T-cell (primary cell): ENCODE measurements at regions of chr1 and their contacts with region 1.

Region 1: GRCh38 chr1:180881806-180882509 is 30.7 kb upstream of the KIAA1614 start:
- DNase-seq: peak in 1 of 35 experiments; percentile 19
- ATAC-seq: no peak
- H3K4me3 ChIP-seq: no peak overlapping the region
- H3K4me3 Mint-ChIP-seq: no peak overlapping the region
- H3K27ac ChIP-seq: no peak overlapping the region
- H3K27ac Mint-ChIP-seq: no peak overlapping the region
- H3K4me1 ChIP-seq: no peaks in the 10 kb centered on the region
- H3K4me1 Mint-ChIP-seq: no peaks in the 10 kb centered on the region
- H3K27me3 ChIP-seq: no peaks in the 10 kb centered on the region
- H3K27me3 Mint-ChIP-seq: no peaks in the 10 kb centered on the region

Region 2: GRCh38 chr1:180680558-180681144 is 201.3 kb before region 1 on chr1:
- CTCF ChIA-PET with region 1: no interaction called
- POLR2A ChIA-PET with region 1: no interaction called
- DNase-seq: no peak
- ATAC-seq: no peak
- H3K4me3 ChIP-seq: no peak overlapping the region
- H3K4me3 Mint-ChIP-seq: no peak overlapping the region
- H3K27ac ChIP-seq: no peak overlapping the region
- H3K27ac Mint-ChIP-seq: no peak overlapping the region
- H3K4me1 ChIP-seq: no peaks in the 10 kb centered on the region
- H3K4me1 Mint-ChIP-seq: peaks cover 2 to 8% (median 6%) of the 10 kb centered on the region in 3 donors
- H3K27me3 ChIP-seq: no peaks in the 10 kb centered on the region
- H3K27me3 Mint-ChIP-seq: no peaks in the 10 kb centered on the region

Region 3: GRCh38 chr1:180821970-180822369 is 60.0 kb before region 1 on chr1:
- CTCF ChIA-PET with region 1: no interaction called
- POLR2A ChIA-PET with region 1: no interaction called
- DNase-seq: no peak
- ATAC-seq: no peak
- H3K4me3 ChIP-seq: no peak overlapping the region
- H3K4me3 Mint-ChIP-seq: no peak overlapping the region
- H3K27ac ChIP-seq: no peak overlapping the region
- H3K27ac Mint-ChIP-seq: no peak overlapping the region
- H3K4me1 ChIP-seq: no peaks in the 10 kb centered on the region
- H3K4me1 Mint-ChIP-seq: no peaks in the 10 kb centered on the region
- H3K27me3 ChIP-seq: no peaks in the 10 kb centered on the region
- H3K27me3 Mint-ChIP-seq: no peaks in the 10 kb centered on the region

Region 4: GRCh38 chr1:181166377-181167196 is 284.6 kb after region 1 on chr1:
- CTCF ChIA-PET with region 1: interaction called, 4 to 12 read pairs
- POLR2A ChIA-PET with region 1: no interaction called
- DNase-seq: peak; percentile 35 to 87 (median 67)
- ATAC-seq: peak; percentile 98 to 99 (median 99)
- H3K4me3 ChIP-seq: no peak overlapping the region
- H3K4me3 Mint-ChIP-seq: peak overlapping the region; percentile 51 to 59 (median 52)
- H3K27ac ChIP-seq: no peak overlapping the region
- H3K27ac Mint-ChIP-seq: peak overlapping the region; percentile 69 to 82
- H3K4me1 ChIP-seq: peaks cover 0 to 9% of the 10 kb centered on the region in 2 experiments
- H3K4me1 Mint-ChIP-seq: peaks cover 5 to 8% (median 7%) of the 10 kb centered on the region in 3 donors
- H3K27me3 ChIP-seq: no peaks in the 10 kb centered on the region
- H3K27me3 Mint-ChIP-seq: no peaks in the 10 kb centered on the region

Region 5: DNA sequence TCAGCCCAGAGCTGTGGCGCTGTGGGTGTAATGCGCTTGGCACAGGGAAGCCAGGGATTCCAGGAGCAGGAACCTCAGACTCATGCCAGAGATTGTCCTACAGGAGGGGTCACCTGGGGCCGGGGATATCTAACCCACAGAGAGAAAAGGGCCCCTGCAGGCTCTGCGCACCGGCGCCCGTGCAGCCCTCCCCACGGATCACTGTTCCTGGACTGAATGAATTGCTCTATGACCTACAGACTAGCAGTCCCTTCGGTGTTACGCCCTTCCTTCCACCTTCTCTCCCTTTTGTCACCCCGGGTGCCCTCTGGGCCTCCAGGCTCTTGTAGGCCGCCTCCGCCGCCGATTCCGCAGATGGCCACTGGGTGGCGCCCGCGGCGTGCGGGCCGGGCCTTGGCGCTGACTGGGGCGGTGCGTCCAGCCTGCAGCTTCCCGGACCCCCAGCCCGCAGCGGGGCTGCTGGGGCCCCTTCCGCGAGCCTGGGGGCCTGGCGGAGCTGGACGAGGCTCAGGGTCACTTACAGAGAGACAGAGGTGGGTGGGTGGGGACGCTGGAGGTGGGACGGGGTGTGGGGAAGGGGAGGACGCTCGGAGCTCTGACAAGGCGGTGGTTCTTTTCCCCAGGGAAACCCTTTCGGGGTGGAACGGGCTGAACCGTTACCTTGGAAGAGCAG is 307.9 kb after region 1 on chr1:
- CTCF ChIA-PET with region 1: no interaction called
- POLR2A ChIA-PET with region 1: no interaction called
- DNase-seq: peak; percentile 28 to 83 (median 64)
- ATAC-seq: peak; percentile 88 to 95 (median 90)
- H3K4me3 ChIP-seq: peak overlapping the region in 1 of 2 donors; percentile 15
- H3K4me3 Mint-ChIP-seq: peak overlapping the region in 1 of 3 donors; percentile 65
- H3K27ac ChIP-seq: no peak overlapping the region
- H3K27ac Mint-ChIP-seq: no peak overlapping the region
- H3K4me1 ChIP-seq: peaks cover 0 to 9% of the 10 kb centered on the region in 2 experiments
- H3K4me1 Mint-ChIP-seq: peaks cover 4 to 14% (median 5%) of the 10 kb centered on the region in 3 donors
- H3K27me3 ChIP-seq: peaks cover 0 to 44% of the 10 kb centered on the region in 2 experiments
- H3K27me3 Mint-ChIP-seq: peaks cover 6 to 20% of the 10 kb centered on the region in 2 donors